ENCODE measurements at regions of chr1 and their contacts with region 1.

Region 1: DNA sequence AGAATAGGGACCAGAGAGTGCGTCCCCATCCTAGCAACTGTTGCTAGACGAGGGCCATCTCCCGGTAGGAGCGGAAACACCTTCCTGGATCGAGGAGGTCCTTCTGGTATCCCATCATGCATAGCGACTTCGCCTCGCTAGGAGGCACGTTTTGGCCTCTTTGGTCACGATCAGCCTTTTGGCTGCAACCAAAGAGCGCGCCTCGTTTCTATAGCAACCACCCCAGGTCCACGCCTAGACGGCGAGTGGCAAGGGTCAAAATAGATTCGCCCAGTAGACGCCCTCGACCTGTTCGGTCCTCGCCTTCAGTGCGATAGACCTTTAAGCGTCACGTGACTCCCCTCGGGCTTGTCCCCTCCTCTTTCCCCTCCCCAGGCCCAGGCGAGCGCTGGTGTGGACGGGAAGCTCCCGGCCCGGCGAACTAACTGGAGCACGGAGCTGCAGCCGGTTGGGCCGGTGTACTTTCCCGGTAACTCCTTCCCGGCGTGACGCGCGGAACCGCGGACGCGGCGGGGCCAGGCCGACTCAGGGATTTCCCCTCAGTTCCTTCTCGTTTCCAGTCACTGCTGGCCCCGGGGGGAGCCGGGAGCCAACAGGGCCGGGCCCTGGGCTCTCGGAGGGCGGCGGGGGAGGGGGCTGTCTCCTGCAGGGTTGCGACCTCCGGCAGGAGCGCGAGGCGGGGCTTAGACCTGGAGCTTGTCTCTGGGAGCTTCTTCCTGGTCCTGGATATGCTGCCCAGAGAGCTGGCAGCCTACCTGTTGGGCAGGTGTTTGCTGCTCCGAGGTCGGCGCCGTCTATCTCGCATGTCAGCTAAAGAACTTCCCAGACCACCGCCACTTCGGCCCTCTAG is at the start of gene DNAJC16:
- DNase-seq: peak; percentile 100
- ATAC-seq: peak; percentile 71
- H3K4me3 ChIP-seq: peak within 1 kb of the TSS; percentile 80 to 84
- H3K27ac ChIP-seq: peak within 1 kb of the TSS; percentile 73
- H3K4me1 ChIP-seq: peaks cover 10 to 31% of the 10 kb centered on the region in 2 experiments
- H3K27me3 ChIP-seq: no peaks in the 10 kb centered on the region
- CTCF ChIP-seq: peak in 1 of 3 experiments; percentile 8; a peak in 1 of 6 replicates
- POLR2A ChIP-seq: peak; percentile 61
- RAD21 ChIP-seq: no peak
- total RNA-seq, gene DNAJC16: 20.6 TPM

Region 2: DNA sequence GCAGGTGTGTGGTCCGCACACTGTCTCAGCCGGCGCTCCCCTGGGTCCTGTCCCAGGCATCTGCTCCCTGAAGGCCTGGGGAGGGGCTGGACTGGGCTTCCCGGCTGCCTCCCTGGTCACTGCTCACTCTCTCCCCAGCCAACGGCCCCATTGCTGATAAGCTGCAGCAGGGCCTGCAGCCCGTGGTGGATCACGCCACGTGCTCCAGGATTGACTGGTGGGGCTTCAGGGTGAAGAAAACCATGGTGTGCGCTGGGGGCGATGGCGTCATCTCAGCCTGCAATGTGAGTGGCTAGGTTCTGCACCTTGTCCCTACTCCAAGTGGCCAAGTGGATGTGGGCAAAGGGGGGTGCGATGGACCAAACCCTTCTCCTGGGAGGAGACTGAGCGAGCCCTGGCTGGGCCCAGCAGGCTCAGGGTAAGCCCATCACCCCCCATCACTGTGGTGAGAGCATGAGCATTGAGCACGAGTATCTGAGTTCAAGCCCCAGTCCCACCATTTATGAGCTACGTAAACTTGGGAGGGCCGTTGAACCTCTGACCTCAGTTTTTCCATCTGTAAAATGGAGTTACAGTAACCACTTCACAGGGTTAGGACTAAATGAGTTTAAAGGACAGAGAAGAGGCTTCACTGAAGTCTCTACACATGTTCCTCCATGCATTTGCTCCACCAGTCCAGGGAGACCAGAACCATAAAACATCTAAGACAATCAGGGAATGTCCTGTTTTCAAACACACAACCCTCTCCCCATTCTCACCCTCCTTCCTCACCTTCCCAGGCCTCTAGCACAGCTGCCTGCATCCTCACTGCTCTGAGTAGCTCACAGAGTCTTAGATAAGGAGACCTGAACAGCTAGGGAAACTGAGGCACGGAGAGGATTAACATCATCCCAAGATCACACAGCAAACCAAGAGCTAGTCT is 82.0 kb before region 1 on chr1:
- CTCF ChIA-PET with region 1: no interaction called
- POLR2A ChIA-PET with region 1: no interaction called
- RAD21 ChIA-PET with region 1: no interaction called
- intact Hi-C with region 1: no loop called
- DNase-seq: no peak
- ATAC-seq: no peak
- H3K4me3 ChIP-seq: no peak overlapping the region
- H3K27ac ChIP-seq: no peak overlapping the region
- H3K4me1 ChIP-seq: no peaks in the 10 kb centered on the region
- H3K27me3 ChIP-seq: no peaks in the 10 kb centered on the region
- CTCF ChIP-seq: no peak
- POLR2A ChIP-seq: no peak
- RAD21 ChIP-seq: no peak

Region 3: GRCh38 chr1:15617175-15617880 is 90.6 kb after region 1 on chr1 and contains the start of gene DDI2:
- CTCF ChIA-PET with region 1: no interaction called
- POLR2A ChIA-PET with region 1: no interaction called
- RAD21 ChIA-PET with region 1: no interaction called
- intact Hi-C with region 1: loop called (anchors 5 kb)
- DNase-seq: peak; percentile 92
- ATAC-seq: peak; percentile 90
- H3K4me3 ChIP-seq: peak within 1 kb of the TSS; percentile 97
- H3K27ac ChIP-seq: peak within 1 kb of the TSS; percentile 91
- H3K4me1 ChIP-seq: peaks cover 8 to 33% of the 10 kb centered on the region in 2 experiments
- H3K27me3 ChIP-seq: no peaks in the 10 kb centered on the region
- CTCF ChIP-seq: no peak
- POLR2A ChIP-seq: peak; percentile 72
- RAD21 ChIP-seq: no peak
- total RNA-seq, gene DDI2: 26.3 TPM